ENCODE measurements at regions of chr3 and their contacts with region 1.

Region 1: GRCh38 chr3:57597122-57597923 is at the start of gene ARF4:
- DNase-seq: peak; percentile 99 to 100 (median 100)
- H3K4me3 ChIP-seq: peak within 1 kb of the TSS; percentile 97
- H3K27ac ChIP-seq: peak within 1 kb of the TSS; percentile 83 to 97
- H3K4me1 ChIP-seq: peaks cover 7% of the 10 kb centered on the region
- H3K27me3 ChIP-seq: no peaks in the 10 kb centered on the region
- CTCF ChIP-seq: peak in 1 of 3 donors; percentile 17
- EP300 ChIP-seq: no peak
- POLR2A ChIP-seq: peak; percentile 98
- total RNA-seq, gene ARF4: 84.5 to 149 (median 131) TPM

Region 2: GRCh38 chr3:57411715-57412114 is 185.6 kb before region 1 on chr3:
- intact Hi-C with region 1: no loop called
- DNase-seq: no peak
- H3K4me3 ChIP-seq: no peak overlapping the region
- H3K27ac ChIP-seq: no peak overlapping the region
- H3K4me1 ChIP-seq: no peaks in the 10 kb centered on the region
- H3K27me3 ChIP-seq: no peaks in the 10 kb centered on the region
- CTCF ChIP-seq: no peak
- EP300 ChIP-seq: no peak
- POLR2A ChIP-seq: no peak

Region 3: GRCh38 chr3:57555738-57556458 is 41.4 kb before region 1 on chr3 and contains the start of gene PDE12:
- intact Hi-C with region 1: loop called in 1 of 4 experiments (anchors 2 kb)
- DNase-seq: peak; percentile 82 to 89 (median 86)
- H3K4me3 ChIP-seq: peak within 1 kb of the TSS; percentile 78
- H3K27ac ChIP-seq: peak within 1 kb of the TSS; percentile 57 to 84
- H3K4me1 ChIP-seq: peaks cover 5% of the 10 kb centered on the region
- H3K27me3 ChIP-seq: no peaks in the 10 kb centered on the region
- CTCF ChIP-seq: peak in 1 of 3 donors; percentile 8
- EP300 ChIP-seq: peak; percentile 57
- POLR2A ChIP-seq: peak; percentile 60
- total RNA-seq, gene PDE12: 8.7 to 24.2 (median 17.8) TPM

Region 4: DNA sequence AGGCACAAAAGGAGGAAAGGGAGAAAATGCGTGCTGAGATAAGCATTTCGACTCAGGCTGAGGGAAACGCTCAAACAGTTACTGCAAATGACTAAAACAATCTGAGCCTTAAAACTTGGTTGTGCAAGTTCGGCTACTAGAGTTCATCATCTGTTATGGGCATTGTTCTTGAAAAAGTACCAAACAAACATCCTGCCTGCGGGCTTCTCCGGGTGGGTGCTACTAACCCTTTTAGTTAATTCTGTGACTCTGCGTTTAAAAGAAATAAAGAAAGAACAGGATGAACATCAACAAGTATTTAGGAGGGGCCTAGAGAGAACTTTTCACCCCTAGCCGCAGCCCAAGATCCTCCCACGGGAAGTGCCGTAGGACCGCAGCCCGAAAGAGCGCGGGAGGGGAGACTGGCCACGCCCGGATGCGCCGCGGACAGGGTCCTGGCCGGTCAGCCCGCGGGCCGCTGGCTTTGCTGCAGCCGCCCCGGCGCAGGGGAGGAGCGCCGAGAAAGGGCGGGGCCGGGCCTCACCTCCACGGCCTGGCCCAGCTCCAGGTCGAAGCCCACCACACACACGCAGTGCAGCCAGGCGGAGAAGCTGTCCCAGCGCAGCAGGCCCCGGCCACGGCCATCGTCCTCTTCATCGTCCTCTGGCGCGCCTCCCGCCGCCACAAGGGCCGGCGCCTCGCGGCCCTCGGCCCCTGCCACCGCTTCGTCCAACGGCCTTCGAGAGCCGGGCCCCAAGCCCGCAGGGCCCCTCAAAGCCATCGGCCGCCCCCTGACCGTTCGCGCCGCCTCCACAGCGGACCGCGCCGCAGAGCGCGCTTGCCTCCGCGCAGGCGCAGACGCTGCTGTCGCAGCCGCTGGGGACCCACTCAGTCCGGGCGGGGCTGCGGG is 95.2 kb after region 1 on chr3 and contains the start of gene DENND6A:
- intact Hi-C with region 1: loop called in 1 of 4 experiments (anchors 2 kb)
- DNase-seq: peak; percentile 93 to 96 (median 95)
- H3K4me3 ChIP-seq: peak within 1 kb of the TSS; percentile 100
- H3K27ac ChIP-seq: peak within 1 kb of the TSS; percentile 98 to 99
- H3K4me1 ChIP-seq: peaks cover 11% of the 10 kb centered on the region
- H3K27me3 ChIP-seq: no peaks in the 10 kb centered on the region
- CTCF ChIP-seq: no peak
- EP300 ChIP-seq: no peak
- POLR2A ChIP-seq: peak; percentile 99
- total RNA-seq, gene DENND6A: 17.8 to 52.4 (median 39.9) TPM